CD4-positive, alpha-beta T cell (primary cell): ENCODE measurements at regions of chr21 and their contacts with region 1.

Region 1: GRCh38 chr21:29114765-29115164 is 15.7 kb upstream of the MAP3K7CL start:
- DNase-seq: no peak
- ATAC-seq: no peak
- H3K4me3 ChIP-seq: no peak overlapping the region
- H3K4me3 Mint-ChIP-seq: no peak overlapping the region
- H3K27ac ChIP-seq: no peak overlapping the region
- H3K27ac Mint-ChIP-seq: no peak overlapping the region
- H3K4me1 ChIP-seq: no peaks in the 10 kb centered on the region
- H3K4me1 Mint-ChIP-seq: no peaks in the 10 kb centered on the region
- H3K27me3 ChIP-seq: no peaks in the 10 kb centered on the region
- H3K27me3 Mint-ChIP-seq: no peaks in the 10 kb centered on the region
- CTCF ChIP-seq: no peak

Region 2: GRCh38 chr21:29208682-29209059 is 93.9 kb after region 1 on chr21:
- CTCF ChIA-PET with region 1: no interaction called
- POLR2A ChIA-PET with region 1: no interaction called
- intact Hi-C with region 1: no loop called
- DNase-seq: peak in 2 of 14 experiments; percentile 33 to 39
- ATAC-seq: no peak
- H3K4me3 ChIP-seq: no peak overlapping the region
- H3K4me3 Mint-ChIP-seq: no peak overlapping the region
- H3K27ac ChIP-seq: no peak overlapping the region
- H3K27ac Mint-ChIP-seq: no peak overlapping the region
- H3K4me1 ChIP-seq: no peaks in the 10 kb centered on the region
- H3K4me1 Mint-ChIP-seq: no peaks in the 10 kb centered on the region
- H3K27me3 ChIP-seq: no peaks in the 10 kb centered on the region
- H3K27me3 Mint-ChIP-seq: peaks cover 6% of the 10 kb centered on the region
- CTCF ChIP-seq: no peak

Region 3: DNA sequence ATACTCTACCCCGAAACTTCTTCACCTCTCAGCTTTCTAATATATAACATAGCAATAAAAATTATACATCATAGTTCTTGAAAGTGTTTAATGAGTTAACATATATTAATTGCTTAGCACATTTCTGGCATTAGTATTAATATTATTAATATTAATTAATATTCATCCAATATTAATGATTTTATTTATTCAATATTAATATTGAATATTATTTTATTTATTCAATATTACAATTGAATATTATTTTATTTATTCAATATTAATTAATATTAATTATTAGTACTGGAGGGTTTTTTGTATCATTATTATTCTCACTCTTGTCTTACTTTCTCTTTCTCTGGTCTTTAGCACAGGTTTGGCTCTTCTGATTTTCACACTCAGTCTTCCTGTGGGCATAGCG is 719.9 kb after region 1 on chr21:
- CTCF ChIA-PET with region 1: no interaction called
- POLR2A ChIA-PET with region 1: no interaction called
- intact Hi-C with region 1: loop called in 1 of 2 experiments (anchors 5 kb)
- DNase-seq: no peak
- ATAC-seq: no peak
- H3K4me3 ChIP-seq: no peak overlapping the region
- H3K4me3 Mint-ChIP-seq: no peak overlapping the region
- H3K27ac ChIP-seq: no peak overlapping the region
- H3K27ac Mint-ChIP-seq: no peak overlapping the region
- H3K4me1 ChIP-seq: no peaks in the 10 kb centered on the region
- H3K4me1 Mint-ChIP-seq: no peaks in the 10 kb centered on the region
- H3K27me3 ChIP-seq: no peaks in the 10 kb centered on the region
- H3K27me3 Mint-ChIP-seq: peaks cover 23% of the 10 kb centered on the region
- CTCF ChIP-seq: no peak